PC-9 (cell line): ENCODE measurements at regions of chr2 and their contacts with region 1.

Region 1: DNA sequence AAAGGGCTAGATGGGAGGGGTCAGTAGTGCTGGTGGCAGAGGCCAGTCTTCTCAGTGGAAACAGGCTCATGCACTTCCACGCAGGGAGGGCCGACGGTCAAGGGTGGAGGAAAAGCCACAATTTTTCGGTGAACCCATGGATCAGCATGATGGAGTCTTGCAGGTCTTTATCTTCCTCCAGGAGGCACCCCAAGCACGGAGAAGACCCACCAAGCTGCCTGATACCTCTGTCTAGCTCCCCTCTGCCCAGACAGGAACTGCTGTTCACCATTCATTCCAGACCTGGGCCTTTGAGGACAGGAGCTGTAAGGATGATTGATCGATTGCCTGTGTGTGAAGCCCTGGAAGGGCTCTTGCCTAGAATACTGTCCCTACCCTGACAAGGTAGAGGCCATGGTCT is 2.8 kb upstream of the LRRFIP1 start:
- DNase-seq: no peak
- H3K4me3 ChIP-seq: no peak overlapping the region
- H3K27ac ChIP-seq: no peak overlapping the region
- H3K4me1 ChIP-seq: no peaks in the 10 kb centered on the region
- H3K27me3 ChIP-seq: peaks cover 36% of the 10 kb centered on the region
- CTCF ChIP-seq: no peak

Region 2: DNA sequence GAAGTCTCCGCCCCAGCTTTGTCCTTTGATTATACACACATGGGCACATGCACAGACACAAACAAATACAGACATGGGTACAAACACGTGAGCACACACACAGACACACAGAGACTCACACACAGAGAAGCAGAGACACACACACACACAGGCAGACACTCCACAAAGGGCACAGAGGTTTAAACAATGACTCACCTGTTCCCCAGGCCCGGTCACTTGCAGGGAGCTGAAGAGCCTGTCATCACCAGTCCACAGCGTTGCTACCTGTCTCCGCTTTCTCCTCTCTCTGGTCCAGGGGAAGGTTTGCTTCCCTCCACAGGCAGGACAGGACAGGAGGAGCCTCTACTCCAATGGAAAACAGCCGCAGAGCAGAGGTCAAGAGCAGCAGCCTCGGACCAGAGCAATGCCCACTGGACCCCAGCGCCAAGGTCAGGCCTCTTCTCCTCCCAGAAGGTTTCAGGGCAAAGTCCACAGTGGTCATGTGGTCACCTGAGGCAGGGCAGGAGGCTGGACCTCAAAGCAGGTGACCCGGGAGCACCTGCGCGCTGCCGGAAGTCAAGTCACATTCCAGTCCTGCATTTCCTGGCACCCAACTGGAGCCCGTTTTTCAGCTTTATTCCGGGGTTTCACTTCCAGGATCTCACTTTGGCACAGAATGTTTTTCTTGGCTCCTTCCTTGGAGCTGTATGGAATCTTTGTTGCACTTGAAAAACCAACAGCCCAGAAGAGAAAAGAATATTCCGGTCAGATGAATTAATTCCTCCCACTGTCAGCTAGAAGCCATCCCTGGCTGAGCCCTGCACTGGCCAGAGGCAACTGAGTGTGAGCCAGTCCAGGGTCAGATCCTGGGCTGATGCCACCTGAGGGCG is 34.1 kb before region 1 on chr2 and contains the start of gene RAB17:
- CTCF ChIA-PET with region 1: no interaction called
- POLR2A ChIA-PET with region 1: no interaction called
- intact Hi-C with region 1: no loop called
- DNase-seq: peak; percentile 91 to 94
- H3K4me3 ChIP-seq: peak within 1 kb of the TSS; percentile 64
- H3K27ac ChIP-seq: peak within 1 kb of the TSS; percentile 85
- H3K4me1 ChIP-seq: peaks cover 28% of the 10 kb centered on the region
- H3K27me3 ChIP-seq: no peaks in the 10 kb centered on the region
- CTCF ChIP-seq: no peak
- total RNA-seq, gene RAB17: 86.3 and 88.1 TPM in 2 replicates

Region 3: GRCh38 chr2:237614151-237614720 is 10.3 kb before region 1 on chr2:
- CTCF ChIA-PET with region 1: no interaction called
- POLR2A ChIA-PET with region 1: no interaction called
- intact Hi-C with region 1: no loop called
- DNase-seq: peak; percentile 91 to 99
- H3K4me3 ChIP-seq: no peak overlapping the region
- H3K27ac ChIP-seq: peak overlapping the region; percentile 24
- H3K4me1 ChIP-seq: peaks cover 19% of the 10 kb centered on the region
- H3K27me3 ChIP-seq: no peaks in the 10 kb centered on the region
- CTCF ChIP-seq: peak; percentile 76

Region 4: GRCh38 chr2:237731663-237732062 is 107.1 kb after region 1 on chr2:
- CTCF ChIA-PET with region 1: interaction called, 10 read pairs
- POLR2A ChIA-PET with region 1: no interaction called
- intact Hi-C with region 1: no loop called
- DNase-seq: peak; percentile 69 to 77
- H3K4me3 ChIP-seq: no peak overlapping the region
- H3K27ac ChIP-seq: peak overlapping the region; percentile 6; the same call in 1 of the 2 replicates
- H3K4me1 ChIP-seq: peaks cover 31% of the 10 kb centered on the region
- H3K27me3 ChIP-seq: no peaks in the 10 kb centered on the region
- CTCF ChIP-seq: no peak